ENCODE measurements at regions of chr19 and their contacts with region 1.

Region 1: DNA sequence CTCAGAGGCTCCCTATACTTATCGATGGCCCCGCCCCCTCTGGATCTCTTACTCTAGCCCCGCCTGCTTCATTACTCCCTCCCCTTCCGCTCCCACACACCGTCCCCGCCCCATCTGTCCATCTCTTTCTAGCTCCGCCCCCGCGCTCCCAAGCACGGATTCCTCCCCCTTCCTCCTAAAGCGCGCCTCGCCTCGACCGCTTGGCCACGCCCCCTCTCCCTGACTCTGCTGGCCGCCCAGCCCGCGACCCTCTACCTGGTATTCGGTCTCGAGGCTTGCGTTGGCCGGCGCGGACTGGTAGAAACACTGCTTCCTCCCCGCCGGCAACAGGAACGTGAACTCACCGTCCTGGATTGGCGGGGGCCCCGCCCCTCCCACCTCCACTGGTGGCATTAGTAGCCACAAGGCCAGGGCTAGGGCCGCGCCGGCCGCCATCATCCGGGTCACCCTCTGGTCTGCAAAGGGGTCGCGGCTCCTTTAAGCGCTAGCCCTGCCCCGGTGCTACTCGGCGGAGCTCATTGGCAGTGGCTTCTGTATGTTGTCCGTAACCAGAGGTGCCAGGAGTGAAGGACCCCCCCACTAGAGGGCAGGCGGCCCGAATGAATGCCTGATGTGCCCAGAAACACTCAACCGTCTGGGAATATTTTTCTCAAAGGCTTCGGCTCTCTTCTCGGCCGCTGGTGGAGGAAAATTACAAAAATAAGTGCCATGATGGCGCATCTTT is at the start of gene TMED1:
- DNase-seq: peak; percentile 99
- H3K4me3 Mint-ChIP-seq: peak within 1 kb of the TSS; percentile 98
- H3K27ac Mint-ChIP-seq: peak within 1 kb of the TSS; percentile 99
- H3K4me1 Mint-ChIP-seq: peaks cover 10% of the 10 kb centered on the region
- H3K27me3 Mint-ChIP-seq: no peaks in the 10 kb centered on the region
- total RNA-seq, gene TMED1: 17.6 and 22.4 TPM in 2 replicates

Region 2: DNA sequence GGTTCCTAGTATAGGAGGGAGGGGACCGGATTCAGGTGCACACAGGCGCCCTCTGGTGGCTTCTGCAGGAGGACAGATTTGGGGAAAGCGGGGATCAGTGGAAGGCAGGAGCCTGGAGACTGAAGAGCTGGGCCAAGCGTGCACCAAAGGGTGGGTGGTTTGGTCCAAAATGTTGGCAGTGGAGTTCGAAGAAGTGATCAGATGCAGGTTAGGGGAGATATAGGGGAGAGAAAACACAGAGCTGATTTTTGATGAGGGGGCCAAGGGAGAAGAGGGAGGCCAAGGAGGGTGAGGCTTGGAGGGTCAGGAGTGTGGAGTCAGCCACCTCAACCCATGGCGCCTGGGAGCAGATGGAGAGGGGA is 28.6 kb after region 1 on chr19:
- intact Hi-C with region 1: loop called (anchors 2 kb)
- DNase-seq: peak; percentile 95
- H3K4me3 Mint-ChIP-seq: peak overlapping the region; percentile 8
- H3K27ac Mint-ChIP-seq: peak overlapping the region; percentile 2
- H3K4me1 Mint-ChIP-seq: peaks cover 24% of the 10 kb centered on the region
- H3K27me3 Mint-ChIP-seq: no peaks in the 10 kb centered on the region